PC-3 (cell line): ENCODE measurements at regions of chr7 and their contacts with region 1.

Region 1: GRCh38 chr7:17095001-17095574 is 203.4 kb upstream of the AHR start:
- DNase-seq: peak; percentile 97
- ATAC-seq: peak; percentile 83
- H3K4me3 ChIP-seq: no peak overlapping the region
- H3K27ac ChIP-seq: peak overlapping the region; percentile 94
- H3K4me1 ChIP-seq: peaks cover 62% of the 10 kb centered on the region
- H3K27me3 ChIP-seq: no peaks in the 10 kb centered on the region
- CTCF ChIP-seq: no peak

Region 2: DNA sequence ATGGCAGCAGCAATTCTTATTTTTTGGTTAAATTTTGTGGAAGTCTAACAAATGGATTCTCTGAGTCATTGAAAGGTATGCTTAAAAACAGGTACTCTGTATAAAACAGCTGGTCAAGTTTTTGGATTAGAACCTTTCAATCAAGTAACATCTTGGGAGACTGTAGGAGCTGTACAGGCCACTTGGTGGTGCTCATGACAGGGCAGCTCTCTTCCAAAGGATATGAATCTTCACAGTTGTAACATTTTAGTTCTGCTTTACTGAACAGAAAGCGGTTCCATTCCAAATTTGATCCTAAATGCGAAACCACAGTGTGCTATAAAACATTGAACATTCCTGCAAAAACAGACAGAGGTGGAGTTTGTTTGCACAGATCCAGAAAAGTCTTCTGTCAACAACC is 168.8 kb before region 1 on chr7:
- CTCF ChIA-PET with region 1: no interaction called
- POLR2A ChIA-PET with region 1: no interaction called
- intact Hi-C with region 1: loop called (anchors 2 kb)
- DNase-seq: peak; percentile 78
- ATAC-seq: peak; percentile 57
- H3K4me3 ChIP-seq: 0 out of 2 replicates have a peak overlapping the region, but pooled peaks have one; percentile 19
- H3K27ac ChIP-seq: peak overlapping the region; percentile 87
- H3K4me1 ChIP-seq: peaks cover 64% of the 10 kb centered on the region
- H3K27me3 ChIP-seq: no peaks in the 10 kb centered on the region
- CTCF ChIP-seq: peak; percentile 83

Region 3: DNA sequence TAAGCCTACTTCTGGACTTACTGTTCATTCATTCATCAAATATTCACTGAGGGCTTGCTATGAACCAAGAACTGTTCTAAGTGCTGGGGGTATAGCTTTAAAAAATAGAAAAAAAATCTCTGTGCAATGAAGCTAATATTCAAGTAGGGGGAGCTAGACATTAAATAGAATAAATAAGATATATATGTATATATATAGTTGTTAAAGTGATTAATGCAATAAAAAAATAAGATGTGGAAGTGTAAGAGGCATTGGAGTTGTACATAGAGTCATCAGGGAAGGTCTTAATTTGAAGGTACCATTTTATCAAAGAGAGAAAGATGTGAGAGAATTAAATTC is 32.1 kb before region 1 on chr7:
- CTCF ChIA-PET with region 1: interaction called, 3 read pairs
- POLR2A ChIA-PET with region 1: interaction called, 3 read pairs
- intact Hi-C with region 1: loop called (anchors 5 kb)
- DNase-seq: peak; percentile 48
- ATAC-seq: 0 out of 2 replicates have a peak, but pooled peaks have one; percentile 8
- H3K4me3 ChIP-seq: no peak overlapping the region
- H3K27ac ChIP-seq: 0 out of 2 replicates have a peak overlapping the region, but pooled peaks have one; percentile 1
- H3K4me1 ChIP-seq: peaks cover 47% of the 10 kb centered on the region
- H3K27me3 ChIP-seq: no peaks in the 10 kb centered on the region
- CTCF ChIP-seq: peak; percentile 36; the same call in 1 of the 2 replicates

Region 4: DNA sequence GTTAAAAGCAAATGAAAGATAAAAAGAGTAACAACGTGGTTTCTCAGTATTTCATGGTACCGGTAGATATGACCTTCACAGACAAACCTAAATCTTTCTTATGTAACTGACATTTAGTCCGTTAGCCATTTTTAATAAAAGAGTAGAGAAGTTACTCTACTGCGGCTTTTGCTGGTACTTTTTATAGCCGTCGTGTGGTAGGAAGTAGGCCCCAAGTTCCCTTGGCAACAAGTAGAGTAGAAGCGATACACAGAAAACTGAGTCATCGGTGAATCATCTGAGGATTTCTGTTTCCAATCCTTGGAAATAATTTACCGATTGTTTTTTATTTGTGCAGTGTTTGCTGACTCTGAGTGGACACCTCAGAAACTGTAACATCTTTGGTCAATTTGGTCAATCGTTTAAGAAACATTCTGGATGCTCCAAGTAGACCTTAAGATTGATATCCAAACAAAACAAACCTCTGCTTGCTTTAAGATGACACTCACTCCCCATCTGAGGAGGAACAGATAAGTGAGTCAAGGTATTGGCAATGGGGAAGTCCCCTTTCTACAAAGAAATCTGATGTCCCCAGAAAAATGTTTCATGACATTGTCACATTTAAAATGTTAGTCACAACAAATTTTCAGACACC is 139.4 kb after region 1 on chr7:
- CTCF ChIA-PET with region 1: no interaction called
- POLR2A ChIA-PET with region 1: no interaction called
- intact Hi-C with region 1: loop called (anchors 2 kb)
- DNase-seq: peak; percentile 98
- ATAC-seq: peak; percentile 91
- H3K4me3 ChIP-seq: peak overlapping the region; percentile 52
- H3K27ac ChIP-seq: peak overlapping the region; percentile 93
- H3K4me1 ChIP-seq: peaks cover 32% of the 10 kb centered on the region
- H3K27me3 ChIP-seq: no peaks in the 10 kb centered on the region
- CTCF ChIP-seq: 0 out of 2 replicates have a peak, but pooled peaks have one; percentile 9